ENCODE measurements at regions of chr9 and their contacts with region 1.

Region 1: DNA sequence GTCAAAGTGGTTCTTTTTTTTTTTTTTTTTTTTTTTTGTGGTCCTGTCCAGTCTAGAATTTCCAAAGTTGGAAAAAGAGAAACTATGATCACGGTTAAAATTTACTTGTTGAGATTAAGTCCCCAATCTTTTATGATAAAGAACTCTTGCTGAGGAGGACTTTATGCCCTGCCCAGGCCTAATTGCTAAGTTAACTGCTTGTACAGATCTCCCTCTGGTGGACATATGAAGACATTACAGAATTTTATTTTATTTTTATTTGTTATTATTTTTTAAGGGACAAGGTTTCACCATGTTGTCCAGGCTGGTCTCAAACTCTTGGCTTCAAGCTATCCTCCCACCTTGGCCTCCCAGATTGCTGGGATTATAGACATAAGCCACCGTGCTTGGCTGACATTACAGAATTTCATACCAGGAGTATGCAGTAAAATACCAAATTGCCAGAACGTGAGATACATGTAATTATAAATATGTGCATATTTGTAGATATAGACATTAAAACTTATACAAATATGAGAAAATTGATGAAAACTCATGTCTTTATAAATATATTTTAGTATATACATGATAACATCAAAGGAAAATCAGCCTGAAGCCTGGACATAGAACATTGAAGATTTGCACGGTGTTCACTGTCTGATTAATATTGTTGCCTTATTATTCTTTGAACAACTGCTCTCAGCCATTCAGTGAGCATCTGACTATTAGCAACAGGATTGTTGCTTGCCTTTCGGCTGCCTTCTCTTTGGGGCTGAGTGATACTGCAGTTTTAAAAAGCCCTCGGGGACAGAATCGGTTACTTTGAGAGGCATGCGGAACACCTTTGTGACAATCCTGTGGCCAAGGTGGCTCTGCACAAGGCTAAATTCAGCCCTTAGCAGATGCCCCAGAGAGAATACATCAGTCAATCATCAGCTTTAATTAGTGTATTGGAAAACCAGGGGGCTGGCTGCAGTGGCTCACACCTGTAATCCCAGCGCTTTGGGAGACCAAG is 91.0 kb downstream of the RFK start:
- DNase-seq: peak; percentile 58
- H3K4me3 ChIP-seq: no peak overlapping the region
- H3K27ac ChIP-seq: no peak overlapping the region
- H3K4me1 ChIP-seq: no peaks in the 10 kb centered on the region
- H3K27me3 ChIP-seq: peaks cover 4 to 7% of the 10 kb centered on the region in 2 experiments
- CTCF ChIP-seq: peak; percentile 20 to 27
- POLR2A ChIP-seq: no peak

Region 2: GRCh38 chr9:75265525-75265972 is 1037.7 kb before region 1 on chr9:
- CTCF ChIA-PET with region 1: interaction called, 34 read pairs
- POLR2A ChIA-PET with region 1: no interaction called
- dilution Hi-C with region 1: no loop called
- intact Hi-C with region 1: loop called (anchors 2 kb)
- DNase-seq: peak; percentile 52
- H3K4me3 ChIP-seq: no peak overlapping the region
- H3K27ac ChIP-seq: no peak overlapping the region
- H3K4me1 ChIP-seq: no peaks in the 10 kb centered on the region
- H3K27me3 ChIP-seq: peaks cover 0 to 2% of the 10 kb centered on the region in 2 experiments
- CTCF ChIP-seq: peak; percentile 66 to 74
- POLR2A ChIP-seq: no peak

Region 3: GRCh38 chr9:75866273-75866871 is 436.9 kb before region 1 on chr9:
- CTCF ChIA-PET with region 1: interaction called, 35 read pairs
- POLR2A ChIA-PET with region 1: no interaction called
- dilution Hi-C with region 1: no loop called
- intact Hi-C with region 1: loop called (anchors 2 kb)
- DNase-seq: peak; percentile 66
- H3K4me3 ChIP-seq: no peak overlapping the region
- H3K27ac ChIP-seq: no peak overlapping the region
- H3K4me1 ChIP-seq: no peaks in the 10 kb centered on the region
- H3K27me3 ChIP-seq: peaks cover 5 to 6% of the 10 kb centered on the region in 2 experiments
- CTCF ChIP-seq: peak; percentile 38 to 53
- POLR2A ChIP-seq: no peak

Region 4: GRCh38 chr9:75979146-75979761 is 324.0 kb before region 1 on chr9:
- CTCF ChIA-PET with region 1: interaction called, 40 read pairs
- POLR2A ChIA-PET with region 1: no interaction called
- dilution Hi-C with region 1: no loop called
- intact Hi-C with region 1: loop called (anchors 2 kb)
- DNase-seq: no peak
- H3K4me3 ChIP-seq: no peak overlapping the region
- H3K27ac ChIP-seq: no peak overlapping the region
- H3K4me1 ChIP-seq: no peaks in the 10 kb centered on the region
- H3K27me3 ChIP-seq: no peaks in the 10 kb centered on the region
- CTCF ChIP-seq: no peak
- POLR2A ChIP-seq: no peak

Region 5: GRCh38 chr9:76216161-76216649 is 87.0 kb before region 1 on chr9:
- CTCF ChIA-PET with region 1: interaction called, 3 read pairs
- POLR2A ChIA-PET with region 1: no interaction called
- dilution Hi-C with region 1: no loop called
- intact Hi-C with region 1: loop called (anchors 5 kb)
- DNase-seq: peak; percentile 84
- H3K4me3 ChIP-seq: no peak overlapping the region
- H3K27ac ChIP-seq: no peak overlapping the region
- H3K4me1 ChIP-seq: peaks cover 17% of the 10 kb centered on the region
- H3K27me3 ChIP-seq: peaks cover 16 to 39% of the 10 kb centered on the region in 2 experiments
- CTCF ChIP-seq: no peak
- POLR2A ChIP-seq: no peak

Region 6: GRCh38 chr9:76321205-76321828 is 18.1 kb after region 1 on chr9:
- CTCF ChIA-PET with region 1: interaction called, 20 read pairs
- POLR2A ChIA-PET with region 1: no interaction called
- dilution Hi-C with region 1: no loop called
- intact Hi-C with region 1: no loop called
- DNase-seq: peak; percentile 87
- H3K4me3 ChIP-seq: no peak overlapping the region
- H3K27ac ChIP-seq: peak overlapping the region; percentile 63
- H3K4me1 ChIP-seq: peaks cover 8% of the 10 kb centered on the region
- H3K27me3 ChIP-seq: no peaks in the 10 kb centered on the region
- CTCF ChIP-seq: no peak
- POLR2A ChIP-seq: no peak

Measured in endothelial cell of umbilical vein (primary cell).